HepG2 (cell line): ENCODE measurements at regions of chr7 and their contacts with region 1.

Region 1: DNA sequence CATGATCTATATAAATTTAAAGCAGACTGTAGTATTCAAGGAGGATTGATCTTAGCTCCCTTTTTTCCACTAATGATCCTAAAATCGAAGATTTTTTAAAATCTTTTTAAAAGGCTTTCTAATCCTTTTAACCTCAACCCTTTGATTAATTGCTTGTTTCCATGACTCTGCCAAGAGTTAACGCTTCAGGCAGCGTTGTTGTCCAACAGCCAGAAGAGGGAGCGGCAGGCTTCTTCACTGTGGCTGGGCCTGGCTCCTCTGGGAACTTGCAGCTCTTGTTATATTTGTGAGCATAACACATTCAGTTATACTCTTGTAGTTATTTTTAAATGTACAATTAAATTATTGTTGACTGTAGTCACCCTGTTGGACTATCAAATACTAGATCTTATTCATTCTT is 26.3 kb downstream of the CRCP start:
- DNase-seq: no peak
- ATAC-seq: peak; percentile 46; the same call in 2 of the 3 replicates
- H3K4me3 ChIP-seq: no peak overlapping the region
- H3K27ac ChIP-seq: peak overlapping the region; percentile 71
- H3K4me1 ChIP-seq: peaks cover 57% of the 10 kb centered on the region
- H3K27me3 ChIP-seq: no peaks in the 10 kb centered on the region
- CTCF ChIP-seq: peak; percentile 75
- EP300 ChIP-seq: no peak
- POLR2A ChIP-seq: no peak
- RAD21 ChIP-seq: peak; percentile 56; the same call in 1 of the 2 replicates

Region 2: GRCh38 chr7:66013916-66014315 is 127.0 kb before region 1 on chr7:
- CTCF ChIA-PET with region 1: no interaction called
- POLR2A ChIA-PET with region 1: no interaction called
- in situ Hi-C with region 1: no loop called
- intact Hi-C with region 1: no loop called
- DNase-seq: peak; percentile 65
- ATAC-seq: peak; percentile 97
- H3K4me3 ChIP-seq: no peak overlapping the region
- H3K27ac ChIP-seq: no peak overlapping the region
- H3K4me1 ChIP-seq: peaks cover 39% of the 10 kb centered on the region
- H3K27me3 ChIP-seq: no peaks in the 10 kb centered on the region
- CTCF ChIP-seq: peak; percentile 85
- EP300 ChIP-seq: no peak
- POLR2A ChIP-seq: no peak
- RAD21 ChIP-seq: peak; percentile 83

Region 3: GRCh38 chr7:66033471-66034385 is 107.2 kb before region 1 on chr7:
- CTCF ChIA-PET with region 1: no interaction called
- POLR2A ChIA-PET with region 1: no interaction called
- in situ Hi-C with region 1: no loop called
- intact Hi-C with region 1: loop called (anchors 10 kb)
- DNase-seq: no peak
- ATAC-seq: peak; percentile 41; the same call in 1 of the 3 replicates
- H3K4me3 ChIP-seq: no peak overlapping the region
- H3K27ac ChIP-seq: no peak overlapping the region
- H3K4me1 ChIP-seq: peaks cover 31% of the 10 kb centered on the region
- H3K27me3 ChIP-seq: no peaks in the 10 kb centered on the region
- CTCF ChIP-seq: no peak
- EP300 ChIP-seq: no peak
- POLR2A ChIP-seq: no peak
- RAD21 ChIP-seq: no peak

Region 4: DNA sequence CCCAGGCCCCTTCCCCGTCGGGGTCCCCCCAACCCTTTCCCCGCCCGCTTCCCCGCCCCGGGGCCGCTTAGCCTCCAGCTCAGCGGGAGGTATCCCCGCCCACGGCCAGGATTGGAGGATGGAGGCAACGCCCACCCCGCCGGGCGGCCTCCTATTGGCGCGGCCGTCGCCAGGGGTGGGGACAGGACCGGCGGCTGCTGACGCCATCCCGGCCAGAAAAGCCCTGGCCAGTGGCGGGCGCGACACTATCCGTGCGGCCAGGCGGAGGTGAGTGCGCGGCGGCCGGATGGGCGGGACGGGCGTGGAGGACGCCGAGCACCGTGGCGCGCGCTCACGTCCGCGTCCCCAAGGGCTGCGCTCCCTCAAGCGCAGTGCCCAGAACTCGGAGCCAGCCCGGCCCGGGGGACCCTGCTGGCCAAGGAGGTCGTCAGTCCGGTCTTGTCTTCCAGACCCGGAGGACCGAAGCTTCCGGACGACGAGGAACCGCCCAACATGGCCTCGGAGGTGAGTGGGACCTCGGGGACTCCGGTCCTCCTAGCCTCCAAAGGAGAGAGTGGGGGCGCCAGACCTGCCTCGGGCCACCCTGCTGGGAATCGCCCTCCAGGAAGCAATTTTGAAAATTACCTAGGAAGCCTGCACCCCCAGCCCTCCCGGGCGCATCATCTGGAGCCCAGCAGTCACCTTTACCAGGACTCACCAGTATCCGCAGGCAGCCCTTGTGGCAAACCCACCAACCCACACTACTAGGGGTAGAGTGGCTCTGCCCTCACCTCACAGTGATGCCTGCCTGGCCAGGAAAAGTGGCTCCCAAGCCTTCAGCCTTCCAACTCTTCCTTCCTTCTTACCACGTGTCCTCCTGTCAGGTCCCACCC is 65.1 kb before region 1 on chr7 and contains the start of gene ASL:
- CTCF ChIA-PET with region 1: no interaction called
- POLR2A ChIA-PET with region 1: interaction called, 18 read pairs
- in situ Hi-C with region 1: no loop called
- intact Hi-C with region 1: no loop called
- DNase-seq: peak; percentile 83
- ATAC-seq: peak; percentile 97
- H3K4me3 ChIP-seq: peak within 1 kb of the TSS; percentile 84 to 95 (median 85)
- H3K27ac ChIP-seq: peak within 1 kb of the TSS; percentile 65
- H3K4me1 ChIP-seq: peaks cover 33% of the 10 kb centered on the region
- H3K27me3 ChIP-seq: peaks cover 0 to 7% of the 10 kb centered on the region in 2 experiments; a peak in 2 of 5 replicates
- CTCF ChIP-seq: peak; percentile 7; the same call in 1 of the 2 replicates
- EP300 ChIP-seq: no peak
- POLR2A ChIP-seq: peak; percentile 72 to 97
- RAD21 ChIP-seq: no peak; the same call in 1 of the 2 replicates
- total RNA-seq, gene ASL: 63.8 and 71.4 TPM in 2 replicates

Region 5: GRCh38 chr7:66114793-66115649 is 25.9 kb before region 1 on chr7 and contains the start of gene CRCP:
- CTCF ChIA-PET with region 1: no interaction called
- POLR2A ChIA-PET with region 1: interaction called, 33 read pairs
- in situ Hi-C with region 1: no loop called
- intact Hi-C with region 1: loop called (anchors 2 kb)
- DNase-seq: peak; percentile 87
- ATAC-seq: peak; percentile 89
- H3K4me3 ChIP-seq: peak within 1 kb of the TSS; percentile 77 to 89 (median 77)
- H3K27ac ChIP-seq: peak within 1 kb of the TSS; percentile 98
- H3K4me1 ChIP-seq: peaks cover 56% of the 10 kb centered on the region
- H3K27me3 ChIP-seq: no peaks in the 10 kb centered on the region
- CTCF ChIP-seq: peak; percentile 60
- EP300 ChIP-seq: no peak
- POLR2A ChIP-seq: peak; percentile 74 to 83
- RAD21 ChIP-seq: no peak; the same call in 1 of the 2 replicates
- total RNA-seq, gene CRCP: 31.0 and 41.1 TPM in 2 replicates

Region 6: DNA sequence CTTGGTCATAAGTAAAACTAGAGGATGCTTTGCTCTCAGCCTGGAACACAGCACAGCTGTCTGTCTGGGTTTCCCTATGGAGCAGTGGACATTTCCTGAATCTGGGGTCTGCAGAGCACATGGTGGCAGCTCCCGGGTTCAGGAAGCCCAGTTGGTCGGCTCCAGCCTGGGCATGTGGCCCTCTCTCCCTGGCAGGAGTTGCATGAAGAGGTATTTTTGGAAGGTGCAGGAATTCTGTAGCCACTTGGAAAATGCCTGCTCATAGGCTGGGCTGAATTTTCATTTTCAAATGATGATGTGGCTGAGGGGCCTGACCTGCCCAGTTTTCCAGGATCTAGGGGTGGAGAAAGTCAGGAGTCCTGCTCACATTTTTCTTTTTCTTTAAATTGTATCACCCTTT is 57.5 kb after region 1 on chr7:
- CTCF ChIA-PET with region 1: no interaction called
- POLR2A ChIA-PET with region 1: interaction called, 3 read pairs
- in situ Hi-C with region 1: no loop called
- intact Hi-C with region 1: loop called (anchors 5 kb)
- DNase-seq: no peak
- ATAC-seq: peak; percentile 38
- H3K4me3 ChIP-seq: no peak overlapping the region; a peak in 1 of 6 replicates
- H3K27ac ChIP-seq: no peak overlapping the region
- H3K4me1 ChIP-seq: peaks cover 56% of the 10 kb centered on the region
- H3K27me3 ChIP-seq: no peaks in the 10 kb centered on the region
- CTCF ChIP-seq: no peak
- EP300 ChIP-seq: no peak
- POLR2A ChIP-seq: no peak
- RAD21 ChIP-seq: no peak

Region 7: GRCh38 chr7:66535414-66536329 is 394.7 kb after region 1 on chr7:
- CTCF ChIA-PET with region 1: no interaction called
- POLR2A ChIA-PET with region 1: interaction called, 3 read pairs
- in situ Hi-C with region 1: no loop called
- intact Hi-C with region 1: loop called (anchors 5 kb)
- DNase-seq: peak; percentile 84
- ATAC-seq: peak; percentile 89
- H3K4me3 ChIP-seq: peak overlapping the region in 2 of 3 experiments; percentile 39 to 57; a peak in 4 of 6 replicates
- H3K27ac ChIP-seq: peak overlapping the region; percentile 93
- H3K4me1 ChIP-seq: peaks cover 67% of the 10 kb centered on the region
- H3K27me3 ChIP-seq: no peaks in the 10 kb centered on the region
- CTCF ChIP-seq: no peak
- EP300 ChIP-seq: peak in 1 of 2 experiments; percentile 6; a peak in 2 of 4 replicates
- POLR2A ChIP-seq: peak in 1 of 2 experiments; percentile 48; a peak in 2 of 4 replicates
- RAD21 ChIP-seq: no peak